ENCODE measurements at regions of chr15 and their contacts with region 1.

Region 1: GRCh38 chr15:29685155-29686078 is 136.9 kb downstream of the TJP1 start:
- DNase-seq: no peak
- H3K4me3 Mint-ChIP-seq: no peak overlapping the region
- H3K27ac Mint-ChIP-seq: no peak overlapping the region
- H3K4me1 Mint-ChIP-seq: no peaks in the 10 kb centered on the region
- H3K27me3 Mint-ChIP-seq: no peaks in the 10 kb centered on the region
- CTCF ChIP-seq: no peak

Region 2: GRCh38 chr15:29747837-29748417 is 62.5 kb after region 1 on chr15:
- CTCF ChIA-PET with region 1: no interaction called
- intact Hi-C with region 1: loop called (anchors 10 kb)
- DNase-seq: no peak
- H3K4me3 Mint-ChIP-seq: no peak overlapping the region
- H3K27ac Mint-ChIP-seq: no peak overlapping the region
- H3K4me1 Mint-ChIP-seq: no peaks in the 10 kb centered on the region
- H3K27me3 Mint-ChIP-seq: no peaks in the 10 kb centered on the region
- CTCF ChIP-seq: no peak

Region 3: GRCh38 chr15:29835301-29835700 is 149.9 kb after region 1 on chr15:
- CTCF ChIA-PET with region 1: no interaction called
- intact Hi-C with region 1: no loop called
- DNase-seq: no peak
- H3K4me3 Mint-ChIP-seq: no peak overlapping the region
- H3K27ac Mint-ChIP-seq: no peak overlapping the region
- H3K4me1 Mint-ChIP-seq: no peaks in the 10 kb centered on the region
- H3K27me3 Mint-ChIP-seq: no peaks in the 10 kb centered on the region
- CTCF ChIP-seq: no peak